GM18951 (cell line): ENCODE measurements at regions of chr12 and their contacts with region 1.

Region 1: GRCh38 chr12:124036674-124037109 is 63.7 kb downstream of the ZNF664 start:
- POLR2A ChIP-seq: no peak

Region 2: DNA sequence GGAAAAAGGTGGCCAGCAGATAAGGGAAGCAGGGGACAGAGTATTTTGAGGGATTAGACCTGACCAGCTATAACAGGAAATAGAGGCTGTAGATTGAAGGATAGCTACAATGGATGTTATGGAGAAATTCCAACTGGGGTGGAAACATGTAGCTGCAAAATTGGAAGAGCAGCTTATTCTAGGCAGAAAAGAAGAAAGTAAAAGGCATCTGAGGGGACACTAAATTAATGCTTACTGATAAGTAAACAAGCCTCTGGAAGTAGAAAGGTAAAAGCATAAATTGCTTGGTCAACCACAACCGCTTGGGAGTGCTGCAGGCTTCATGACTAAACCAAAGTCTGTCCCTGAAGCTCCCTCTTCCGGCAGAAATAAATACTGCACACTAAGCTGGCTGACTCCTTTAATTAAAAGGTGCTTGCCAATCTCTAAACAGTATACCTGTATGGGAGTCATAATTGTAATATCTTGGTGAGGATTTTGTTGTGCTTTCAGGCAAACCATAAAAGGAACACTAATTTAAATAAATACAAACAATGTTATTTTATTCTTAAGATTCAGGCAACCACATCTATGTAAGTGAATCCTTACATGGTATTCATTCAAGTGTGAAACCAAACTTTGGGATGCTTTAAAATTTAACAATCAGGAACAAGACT is 870.0 kb after region 1 on chr12:
- in situ Hi-C with region 1: loop called (anchors 25 kb)
- POLR2A ChIP-seq: no peak

Region 3: DNA sequence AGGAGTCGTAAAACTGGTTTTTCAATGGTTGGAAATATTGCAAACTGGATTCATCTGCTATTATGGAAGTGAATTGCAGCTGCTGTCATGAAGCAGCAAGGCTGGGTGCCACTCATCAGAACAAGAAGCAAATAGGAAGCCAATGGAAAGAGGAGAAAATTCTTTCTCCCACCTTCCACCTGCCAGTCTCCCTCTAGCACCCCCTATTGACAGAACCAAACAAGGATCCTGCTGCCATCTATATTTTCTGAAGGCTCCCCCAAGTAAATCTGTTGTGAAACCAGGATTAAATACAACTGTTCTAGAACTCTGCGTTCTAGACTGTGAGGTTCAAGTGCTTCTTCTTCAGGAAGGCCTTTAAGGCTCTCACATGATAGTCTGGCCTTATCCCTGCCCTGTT is 1315.1 kb after region 1 on chr12:
- in situ Hi-C with region 1: no loop called
- POLR2A ChIP-seq: no peak